HepG2 (cell line): ENCODE measurements at regions of chr4 and their contacts with region 1.

Region 1: GRCh38 chr4:185471235-185472102 is at the start of gene CCDC110:
- DNase-seq: peak; percentile 50
- ATAC-seq: peak; percentile 96
- H3K4me3 ChIP-seq: peak within 1 kb of the TSS; percentile 61 to 81 (median 73)
- H3K27ac ChIP-seq: no peak within 1 kb of the TSS
- H3K4me1 ChIP-seq: peaks cover 12% of the 10 kb centered on the region
- H3K27me3 ChIP-seq: peaks cover 0 to 54% of the 10 kb centered on the region in 2 experiments; a peak in 3 of 5 replicates
- CTCF ChIP-seq: peak; percentile 81
- EP300 ChIP-seq: no peak
- POLR2A ChIP-seq: no peak
- RAD21 ChIP-seq: peak; percentile 93
- total RNA-seq, gene CCDC110: not detected in 2 replicates

Region 2: GRCh38 chr4:184838249-184839074 is 633.0 kb before region 1 on chr4:
- CTCF ChIA-PET with region 1: no interaction called
- POLR2A ChIA-PET with region 1: no interaction called
- in situ Hi-C with region 1: no loop called
- intact Hi-C with region 1: no loop called
- DNase-seq: peak; percentile 98
- ATAC-seq: peak; percentile 85
- H3K4me3 ChIP-seq: 0 out of 6 replicates have a peak overlapping the region, but pooled peaks of 1 of the 3 experiments have one; percentile 1
- H3K27ac ChIP-seq: peak overlapping the region; percentile 51
- H3K4me1 ChIP-seq: peaks cover 36% of the 10 kb centered on the region
- H3K27me3 ChIP-seq: no peaks in the 10 kb centered on the region; a peak in 1 of 5 replicates
- CTCF ChIP-seq: no peak
- EP300 ChIP-seq: peak; percentile 18 to 87; a peak in 3 of 4 replicates
- POLR2A ChIP-seq: no peak
- RAD21 ChIP-seq: no peak

Region 3: DNA sequence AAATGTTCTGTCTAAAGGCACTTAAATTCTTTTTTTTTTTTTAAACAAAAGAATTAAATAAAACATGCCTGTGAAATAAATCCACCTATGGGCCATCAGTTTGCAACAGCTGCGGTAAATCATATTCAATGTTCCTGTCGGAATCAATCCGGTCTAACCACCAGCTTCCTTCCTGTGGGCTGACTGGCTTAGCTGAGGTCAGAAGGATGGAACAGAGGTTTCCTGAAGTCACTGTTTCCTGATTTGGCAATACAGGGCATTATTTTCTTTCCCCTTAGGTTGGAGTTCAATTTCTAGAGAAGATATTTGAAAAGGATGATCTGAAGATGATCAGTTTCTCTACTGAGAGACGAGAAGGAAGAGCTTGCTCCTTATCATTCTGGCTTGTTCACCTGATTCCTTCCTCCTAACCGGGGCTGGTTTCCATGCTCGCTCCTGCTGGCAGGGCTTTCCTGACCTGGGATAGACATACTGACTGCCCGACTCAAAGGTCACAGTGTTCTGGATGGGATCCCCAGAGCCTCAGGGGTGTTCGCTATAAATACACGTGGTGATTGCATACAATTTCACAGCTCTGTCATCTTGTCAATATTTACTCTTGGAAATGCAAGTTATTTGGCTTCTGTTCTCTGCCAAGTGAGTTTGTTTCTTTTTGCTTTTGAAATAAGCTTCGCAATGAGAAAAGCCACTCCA is 42.2 kb after region 1 on chr4:
- CTCF ChIA-PET with region 1: no interaction called
- POLR2A ChIA-PET with region 1: no interaction called
- in situ Hi-C with region 1: no loop called
- intact Hi-C with region 1: loop called (anchors 5 kb)
- DNase-seq: peak; percentile 73
- ATAC-seq: peak; percentile 100
- H3K4me3 ChIP-seq: peak overlapping the region in 2 of 3 experiments; percentile 19 to 24; a peak in 4 of 6 replicates
- H3K27ac ChIP-seq: peak overlapping the region; percentile 59
- H3K4me1 ChIP-seq: peaks cover 23% of the 10 kb centered on the region
- H3K27me3 ChIP-seq: no peaks in the 10 kb centered on the region
- CTCF ChIP-seq: no peak
- EP300 ChIP-seq: no peak; a peak in 1 of 4 replicates
- POLR2A ChIP-seq: no peak
- RAD21 ChIP-seq: no peak

Region 4: GRCh38 chr4:186015212-186015785 is 543.8 kb after region 1 on chr4:
- CTCF ChIA-PET with region 1: no interaction called
- POLR2A ChIA-PET with region 1: no interaction called
- in situ Hi-C with region 1: no loop called
- intact Hi-C with region 1: no loop called
- DNase-seq: no peak
- ATAC-seq: peak; percentile 45; the same call in 2 of the 3 replicates
- H3K4me3 ChIP-seq: no peak overlapping the region
- H3K27ac ChIP-seq: no peak overlapping the region
- H3K4me1 ChIP-seq: no peaks in the 10 kb centered on the region
- H3K27me3 ChIP-seq: peaks cover 0 to 3% of the 10 kb centered on the region in 2 experiments; a peak in 3 of 5 replicates
- CTCF ChIP-seq: peak; percentile 57
- EP300 ChIP-seq: no peak
- POLR2A ChIP-seq: no peak
- RAD21 ChIP-seq: no peak

Region 5: DNA sequence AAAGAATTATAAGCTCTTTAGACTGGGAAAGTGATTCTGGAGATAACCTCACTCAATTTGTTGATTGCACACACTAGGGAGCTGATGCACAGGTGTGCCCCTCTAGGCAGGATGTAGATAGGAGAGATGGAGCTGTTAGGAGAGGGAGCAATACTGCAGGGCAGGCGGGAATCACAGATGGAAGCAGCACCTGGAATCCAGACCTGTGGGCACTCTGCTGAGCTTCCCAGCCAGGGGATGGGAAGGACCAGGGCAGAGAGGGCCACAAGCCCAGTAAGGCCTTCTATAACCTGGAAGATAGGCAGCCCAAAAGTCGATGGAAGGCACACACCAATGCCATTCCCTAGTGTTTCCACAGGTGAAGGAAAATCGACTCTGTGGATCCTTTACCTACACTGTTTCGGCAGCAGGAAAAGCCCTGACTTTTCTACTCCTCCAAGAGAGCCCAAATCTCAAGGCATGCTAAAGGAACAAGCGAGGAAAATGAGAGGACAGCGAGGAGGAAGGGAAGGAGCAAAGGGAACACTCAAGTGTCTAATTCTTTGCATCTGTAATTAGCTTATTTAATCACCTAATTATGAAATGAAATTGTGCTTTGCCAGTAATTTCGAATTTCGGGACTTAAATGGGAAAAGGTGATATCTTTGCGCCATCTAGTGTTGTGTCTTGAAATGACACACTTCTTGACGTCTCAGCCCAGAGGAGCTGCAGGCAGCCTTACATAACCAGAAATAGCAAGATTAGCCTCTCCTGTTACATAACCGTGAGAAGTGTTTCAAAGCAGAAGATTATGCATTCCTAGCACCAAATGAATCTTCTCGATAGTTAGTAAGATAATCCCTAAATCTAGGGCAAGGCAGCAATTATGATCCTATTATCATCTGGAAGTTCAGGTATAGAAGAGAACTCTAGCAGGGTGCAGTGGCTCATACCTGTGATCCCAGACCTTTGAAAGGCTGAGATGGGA is 566.5 kb after region 1 on chr4:
- CTCF ChIA-PET with region 1: no interaction called
- POLR2A ChIA-PET with region 1: no interaction called
- in situ Hi-C with region 1: loop called (anchors 25 kb)
- intact Hi-C with region 1: loop called (anchors 1 kb)
- DNase-seq: peak; percentile 59
- ATAC-seq: peak; percentile 73
- H3K4me3 ChIP-seq: no peak overlapping the region
- H3K27ac ChIP-seq: no peak overlapping the region
- H3K4me1 ChIP-seq: peaks cover 12% of the 10 kb centered on the region; the same call in 1 of the 2 replicates
- H3K27me3 ChIP-seq: peaks cover 1 to 17% of the 10 kb centered on the region in 2 experiments; a peak in 4 of 5 replicates
- CTCF ChIP-seq: peak; percentile 88
- EP300 ChIP-seq: no peak
- POLR2A ChIP-seq: no peak
- RAD21 ChIP-seq: peak; percentile 77